HCT116 (cell line): ENCODE measurements at regions of chr15 and their contacts with region 1.

Region 1: DNA sequence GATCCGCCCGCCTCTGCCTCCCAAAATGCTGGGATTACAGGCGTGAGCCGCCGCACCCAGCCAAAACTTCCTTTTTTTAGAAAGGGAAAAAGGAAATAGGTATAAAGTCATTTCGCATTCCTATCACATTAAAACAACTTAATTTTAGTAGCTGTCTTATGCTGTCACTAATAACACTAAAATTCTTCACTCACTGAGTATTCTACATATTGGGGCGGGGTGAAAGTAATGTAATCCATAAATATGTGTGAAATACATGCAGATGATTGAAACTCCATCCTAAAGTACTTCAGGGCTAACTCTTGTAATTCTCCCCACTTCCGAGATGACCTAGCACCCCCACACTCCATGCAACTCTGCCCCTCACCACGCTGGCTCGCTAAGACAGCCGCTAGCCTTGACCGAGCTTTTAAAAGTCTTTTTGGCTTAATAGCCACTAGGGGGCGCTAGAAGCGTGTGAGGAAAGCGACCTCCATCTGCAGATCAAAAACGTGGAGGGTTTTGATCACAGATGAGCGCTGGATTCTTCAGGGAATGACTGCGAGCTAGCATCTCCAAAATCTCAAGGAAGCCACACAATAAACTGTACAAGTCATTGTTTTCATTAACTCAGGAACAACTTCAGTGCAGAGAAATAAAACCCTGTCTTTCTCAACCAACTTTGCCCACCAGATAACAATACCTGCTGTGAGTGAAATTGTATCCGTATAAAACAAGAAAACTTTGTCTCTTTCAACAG is 129.3 kb upstream of the IGF1R start:
- DNase-seq: peak; percentile 54
- ATAC-seq: peak; percentile 91
- H3K4me3 ChIP-seq: no peak overlapping the region
- H3K27ac ChIP-seq: no peak overlapping the region
- H3K4me1 ChIP-seq: 0 out of 4 replicates have a peak, but pooled peaks cover 0 to 2% of the 10 kb centered on the region in 2 experiments
- H3K27me3 ChIP-seq: no peaks in the 10 kb centered on the region
- CTCF ChIP-seq: peak; percentile 67 to 86 (median 69); a peak in 5 of 6 replicates
- POLR2A ChIP-seq: no peak
- RAD21 ChIP-seq: peak; percentile 74

Region 2: DNA sequence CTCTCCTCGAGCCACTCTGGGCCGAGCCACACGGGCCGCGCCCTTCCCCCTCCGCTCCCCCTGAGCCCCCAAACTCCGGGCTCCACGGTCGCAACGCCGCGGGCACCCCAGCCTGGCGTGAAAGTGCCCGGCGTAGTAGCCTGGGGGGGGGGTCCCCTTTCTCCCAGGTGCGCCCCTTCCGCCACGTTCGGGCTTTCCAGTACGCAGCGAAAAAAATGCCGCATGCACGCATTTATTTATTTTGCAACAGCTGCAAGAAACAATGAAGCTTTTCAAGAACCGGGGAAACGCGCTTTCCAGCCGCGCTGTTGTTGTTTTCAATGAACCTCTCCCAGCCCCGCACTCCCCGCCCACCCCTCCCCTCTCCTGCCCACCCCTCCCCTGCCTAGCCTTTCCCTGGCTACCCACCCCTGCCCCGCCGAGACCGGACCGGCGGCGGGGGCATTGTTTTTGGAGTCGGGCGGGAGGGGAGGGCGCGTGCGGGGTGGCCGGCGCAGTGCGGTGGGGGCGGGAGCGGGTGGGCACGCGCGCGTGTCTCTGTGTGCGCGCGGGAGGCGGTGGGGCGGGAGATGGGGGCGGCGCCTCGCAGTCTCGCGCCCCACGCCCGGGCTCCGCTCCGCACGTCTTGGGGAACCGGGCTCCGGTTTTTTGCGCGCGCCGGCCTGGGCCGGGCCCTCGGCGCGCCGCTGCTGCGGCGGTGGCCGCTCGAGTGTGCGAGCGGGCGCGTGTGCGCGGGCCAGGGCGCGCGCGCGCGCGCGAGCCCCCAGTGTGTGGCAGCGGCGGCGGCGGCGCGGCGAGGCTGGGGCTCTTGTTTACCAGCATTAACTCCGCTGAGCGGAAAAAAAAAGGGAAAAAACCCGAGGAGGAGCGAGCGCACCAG is 129.0 kb after region 1 on chr15 and contains the start of gene IGF1R:
- CTCF ChIA-PET with region 1: interaction called, 24 read pairs
- POLR2A ChIA-PET with region 1: no interaction called
- RAD21 ChIA-PET with region 1: no interaction called
- intact Hi-C with region 1: no loop called
- DNase-seq: peak; percentile 73
- ATAC-seq: peak; percentile 72
- H3K4me3 ChIP-seq: peak within 1 kb of the TSS; percentile 46 to 65
- H3K27ac ChIP-seq: peak within 1 kb of the TSS; percentile 51; the same call in 1 of the 2 replicates
- H3K4me1 ChIP-seq: peaks cover 3 to 17% of the 10 kb centered on the region in 2 experiments; a peak in 3 of 4 replicates
- H3K27me3 ChIP-seq: peaks cover 57% of the 10 kb centered on the region
- CTCF ChIP-seq: peak in 1 of 3 experiments; percentile 4; a peak in 1 of 6 replicates
- POLR2A ChIP-seq: no peak
- RAD21 ChIP-seq: no peak
- total RNA-seq, gene IGF1R: 16.3 TPM

Region 3: GRCh38 chr15:98658831-98659699 is 140.1 kb after region 1 on chr15:
- CTCF ChIA-PET with region 1: interaction called, 11 read pairs
- POLR2A ChIA-PET with region 1: no interaction called
- RAD21 ChIA-PET with region 1: interaction called in 1 of 2 experiments, 3 read pairs
- intact Hi-C with region 1: loop called (anchors 1 kb)
- DNase-seq: peak; percentile 33
- ATAC-seq: peak; percentile 98
- H3K4me3 ChIP-seq: no peak overlapping the region
- H3K27ac ChIP-seq: no peak overlapping the region
- H3K4me1 ChIP-seq: no peaks in the 10 kb centered on the region; a peak in 1 of 4 replicates
- H3K27me3 ChIP-seq: peaks cover 13% of the 10 kb centered on the region; the same call in 1 of the 2 replicates
- CTCF ChIP-seq: peak; percentile 83 to 92 (median 86)
- POLR2A ChIP-seq: no peak
- RAD21 ChIP-seq: peak; percentile 86

Region 4: DNA sequence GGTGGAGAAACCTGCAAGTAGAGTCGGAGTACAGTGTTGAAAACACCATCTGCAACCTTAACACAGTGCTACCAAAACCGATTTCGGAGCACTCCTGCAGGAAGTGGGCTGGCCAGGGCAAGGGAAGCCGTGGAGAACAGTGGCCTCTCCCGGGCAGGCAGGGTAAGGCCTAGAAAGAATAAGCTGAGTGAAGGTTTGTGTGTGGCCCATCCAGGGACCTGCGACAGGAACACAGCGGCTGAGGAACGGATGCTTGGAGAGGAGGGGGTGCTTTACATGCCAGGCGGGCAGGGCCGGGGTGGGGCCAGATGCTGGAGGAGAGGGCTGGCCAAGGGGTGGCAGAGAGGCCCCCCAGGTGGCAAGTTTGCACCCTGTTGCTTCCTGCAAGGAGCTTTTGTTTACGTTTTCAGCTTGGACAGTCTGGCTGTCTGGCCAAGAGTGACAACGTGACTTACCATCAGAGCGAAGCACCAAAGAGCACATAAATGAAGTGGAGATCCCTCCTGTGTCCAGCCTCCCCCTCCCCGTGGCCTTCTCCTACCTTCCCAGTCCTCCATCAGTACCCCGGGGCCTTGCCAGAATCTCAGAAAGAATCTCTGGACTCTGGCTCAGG is 332.1 kb after region 1 on chr15:
- CTCF ChIA-PET with region 1: interaction called, 25 read pairs
- POLR2A ChIA-PET with region 1: no interaction called
- RAD21 ChIA-PET with region 1: interaction called in 1 of 2 experiments, 5 read pairs
- intact Hi-C with region 1: no loop called
- DNase-seq: peak; percentile 35
- ATAC-seq: peak; percentile 72
- H3K4me3 ChIP-seq: peak overlapping the region in 1 of 2 experiments; percentile 68; a peak in 1 of 4 replicates
- H3K27ac ChIP-seq: no peak overlapping the region
- H3K4me1 ChIP-seq: peaks cover 19 to 32% of the 10 kb centered on the region in 2 experiments
- H3K27me3 ChIP-seq: no peaks in the 10 kb centered on the region
- CTCF ChIP-seq: peak; percentile 78 to 81 (median 79)
- POLR2A ChIP-seq: no peak
- RAD21 ChIP-seq: peak; percentile 93

Region 5: GRCh38 chr15:98881526-98882520 is 362.8 kb after region 1 on chr15:
- CTCF ChIA-PET with region 1: interaction called, 6 read pairs
- POLR2A ChIA-PET with region 1: no interaction called
- RAD21 ChIA-PET with region 1: no interaction called
- intact Hi-C with region 1: loop called (anchors 10 kb)
- DNase-seq: peak; percentile 31
- ATAC-seq: peak; percentile 84
- H3K4me3 ChIP-seq: no peak overlapping the region
- H3K27ac ChIP-seq: no peak overlapping the region
- H3K4me1 ChIP-seq: no peaks in the 10 kb centered on the region; a peak in 1 of 4 replicates
- H3K27me3 ChIP-seq: no peaks in the 10 kb centered on the region
- CTCF ChIP-seq: peak; percentile 51 to 68 (median 66); a peak in 5 of 6 replicates
- POLR2A ChIP-seq: no peak
- RAD21 ChIP-seq: peak; percentile 76

Region 6: DNA sequence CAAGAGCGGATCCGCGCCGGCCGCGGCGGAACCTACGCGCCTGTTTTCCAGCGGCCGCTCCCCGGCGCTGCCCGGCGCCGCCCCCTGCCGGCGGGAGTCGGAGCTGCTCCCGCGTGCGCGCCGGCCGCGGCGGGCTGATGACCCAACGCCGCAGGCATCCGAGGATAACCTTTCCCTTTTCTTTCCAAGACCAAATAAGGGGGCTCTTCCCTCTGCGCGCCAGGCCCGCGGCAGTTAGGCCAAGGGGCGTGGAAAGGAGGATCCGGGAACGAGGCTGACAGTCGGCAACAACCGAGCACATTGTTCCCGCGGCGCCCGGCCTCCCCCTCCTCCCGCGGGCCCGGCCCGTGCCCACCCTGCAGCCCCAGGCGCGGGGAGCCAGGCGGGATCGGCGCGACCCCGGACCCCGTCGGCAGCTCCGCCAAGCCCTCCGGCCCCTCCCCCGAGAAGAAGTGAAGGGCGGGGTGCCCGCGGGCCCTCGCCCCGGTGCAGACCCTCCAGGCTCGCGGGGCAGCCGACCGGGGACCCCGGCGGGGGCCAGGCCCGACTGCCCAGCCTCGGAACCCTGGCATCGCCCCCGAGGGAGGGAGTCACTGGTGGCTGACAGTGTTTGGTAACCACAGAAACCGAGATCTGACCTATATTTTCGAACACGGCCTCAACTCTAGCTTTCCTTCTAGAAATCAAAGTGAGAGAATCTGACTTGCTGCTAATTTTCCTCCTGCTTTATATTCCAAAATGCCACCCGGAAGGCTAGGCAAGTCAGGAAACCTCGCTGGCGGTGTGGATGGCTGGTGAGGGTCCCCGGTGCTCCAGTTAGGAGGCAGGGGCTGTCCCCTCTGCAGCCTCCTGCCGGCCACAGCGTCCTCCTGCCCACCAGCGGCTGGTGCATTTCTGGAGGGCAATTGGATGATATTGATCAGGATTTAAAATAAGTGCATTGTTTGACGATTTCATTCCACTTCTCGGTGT is 540.3 kb after region 1 on chr15:
- CTCF ChIA-PET with region 1: no interaction called
- POLR2A ChIA-PET with region 1: no interaction called
- RAD21 ChIA-PET with region 1: no interaction called
- intact Hi-C with region 1: loop called (anchors 5 kb)
- DNase-seq: peak; percentile 6
- ATAC-seq: peak; percentile 96
- H3K4me3 ChIP-seq: peak overlapping the region; percentile 28 to 39; a peak in 2 of 4 replicates
- H3K27ac ChIP-seq: no peak overlapping the region
- H3K4me1 ChIP-seq: peaks cover 0 to 9% of the 10 kb centered on the region in 2 experiments; a peak in 1 of 4 replicates
- H3K27me3 ChIP-seq: peaks cover 5% of the 10 kb centered on the region; the same call in 1 of the 2 replicates
- CTCF ChIP-seq: peak; percentile 14 to 58 (median 57); a peak in 4 of 6 replicates
- POLR2A ChIP-seq: no peak
- RAD21 ChIP-seq: peak; percentile 43

Region 7: DNA sequence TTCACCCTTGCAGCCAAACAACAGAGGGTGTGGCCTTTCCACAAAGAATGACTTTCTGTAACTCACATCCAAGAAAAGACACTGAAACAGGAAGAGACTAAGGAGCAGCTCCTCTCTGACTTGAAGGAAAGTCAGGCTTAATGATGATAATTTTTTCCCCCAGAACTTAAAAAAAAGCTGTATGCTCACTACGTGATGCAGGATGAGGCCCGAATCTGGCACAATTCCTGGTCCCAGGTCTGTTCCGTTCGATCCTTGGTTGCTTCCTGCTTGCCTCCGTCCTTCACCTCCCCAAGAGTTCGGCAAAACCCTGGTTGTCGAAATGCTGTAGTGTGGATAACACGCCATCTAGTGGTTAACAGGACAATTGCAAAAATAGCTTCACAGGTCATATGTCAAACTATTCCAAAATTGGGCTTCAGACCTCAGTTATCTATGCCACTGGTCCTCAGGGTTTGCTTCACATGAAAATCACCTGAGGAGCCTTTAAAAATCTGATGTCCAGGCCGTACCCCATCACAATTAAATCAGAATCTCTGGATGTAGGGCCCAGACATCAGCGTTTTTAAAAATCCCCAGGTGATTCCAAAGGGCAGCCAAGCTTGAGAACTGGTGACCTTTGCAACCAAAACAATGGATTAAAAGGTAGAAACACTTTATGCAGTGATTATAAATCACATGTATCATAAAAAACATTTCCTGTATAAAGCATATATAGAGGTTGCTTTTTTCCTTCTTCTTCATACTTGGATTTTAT is 557.7 kb after region 1 on chr15:
- CTCF ChIA-PET with region 1: interaction called, 13 read pairs
- POLR2A ChIA-PET with region 1: no interaction called
- RAD21 ChIA-PET with region 1: interaction called in 1 of 2 experiments, 3 read pairs
- intact Hi-C with region 1: loop called (anchors 1 kb)
- DNase-seq: peak; percentile 68
- ATAC-seq: peak; percentile 96
- H3K4me3 ChIP-seq: peak overlapping the region; percentile 14 to 48; a peak in 3 of 4 replicates
- H3K27ac ChIP-seq: no peak overlapping the region
- H3K4me1 ChIP-seq: peaks cover 0 to 2% of the 10 kb centered on the region in 2 experiments; a peak in 2 of 4 replicates
- H3K27me3 ChIP-seq: no peaks in the 10 kb centered on the region
- CTCF ChIP-seq: peak; percentile 80 to 88 (median 83)
- POLR2A ChIP-seq: no peak
- RAD21 ChIP-seq: peak; percentile 96

Region 8: GRCh38 chr15:99264125-99264524 is 745.1 kb after region 1 on chr15:
- CTCF ChIA-PET with region 1: no interaction called
- POLR2A ChIA-PET with region 1: no interaction called
- RAD21 ChIA-PET with region 1: no interaction called
- intact Hi-C with region 1: no loop called
- DNase-seq: no peak
- ATAC-seq: no peak
- H3K4me3 ChIP-seq: no peak overlapping the region
- H3K27ac ChIP-seq: no peak overlapping the region
- H3K4me1 ChIP-seq: no peaks in the 10 kb centered on the region
- H3K27me3 ChIP-seq: no peaks in the 10 kb centered on the region
- CTCF ChIP-seq: no peak
- POLR2A ChIP-seq: no peak
- RAD21 ChIP-seq: no peak